ENCODE measurements at regions of chr5 and their contacts with region 1.

Region 1: DNA sequence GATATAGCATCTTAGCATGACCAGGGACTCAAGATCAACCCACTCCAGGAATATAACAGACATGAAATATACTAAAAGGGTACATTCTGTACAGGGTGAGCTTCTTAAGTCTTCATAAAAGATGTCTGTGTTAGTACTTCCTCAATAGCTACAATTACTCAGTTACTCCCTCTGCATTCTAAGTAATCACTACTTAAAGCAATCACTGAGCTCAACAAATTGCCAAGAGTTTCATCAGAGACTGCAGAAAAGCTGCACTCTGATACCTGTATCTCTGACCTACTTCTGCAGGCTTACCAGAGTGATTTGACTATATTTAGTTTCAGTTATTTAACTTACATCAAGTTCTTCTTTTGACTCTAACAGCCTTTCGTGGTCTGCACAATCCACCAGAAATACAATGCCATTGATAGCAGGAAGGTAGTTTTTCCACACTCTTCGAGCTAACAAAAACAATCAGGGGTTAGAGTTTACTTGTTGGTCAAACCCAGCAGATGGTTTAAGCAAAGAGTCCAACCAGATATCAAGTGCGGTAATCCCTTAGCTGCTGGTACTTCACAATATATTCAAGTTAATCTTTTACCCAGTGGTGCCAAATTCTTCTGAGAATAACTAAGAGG is 23.3 kb downstream of the SAR1B start:
- DNase-seq: no peak
- H3K4me3 Mint-ChIP-seq: peak overlapping the region; percentile 22
- H3K27ac Mint-ChIP-seq: peak overlapping the region; percentile 84
- H3K4me1 Mint-ChIP-seq: peaks cover 45% of the 10 kb centered on the region
- H3K27me3 Mint-ChIP-seq: no peaks in the 10 kb centered on the region

Region 2: DNA sequence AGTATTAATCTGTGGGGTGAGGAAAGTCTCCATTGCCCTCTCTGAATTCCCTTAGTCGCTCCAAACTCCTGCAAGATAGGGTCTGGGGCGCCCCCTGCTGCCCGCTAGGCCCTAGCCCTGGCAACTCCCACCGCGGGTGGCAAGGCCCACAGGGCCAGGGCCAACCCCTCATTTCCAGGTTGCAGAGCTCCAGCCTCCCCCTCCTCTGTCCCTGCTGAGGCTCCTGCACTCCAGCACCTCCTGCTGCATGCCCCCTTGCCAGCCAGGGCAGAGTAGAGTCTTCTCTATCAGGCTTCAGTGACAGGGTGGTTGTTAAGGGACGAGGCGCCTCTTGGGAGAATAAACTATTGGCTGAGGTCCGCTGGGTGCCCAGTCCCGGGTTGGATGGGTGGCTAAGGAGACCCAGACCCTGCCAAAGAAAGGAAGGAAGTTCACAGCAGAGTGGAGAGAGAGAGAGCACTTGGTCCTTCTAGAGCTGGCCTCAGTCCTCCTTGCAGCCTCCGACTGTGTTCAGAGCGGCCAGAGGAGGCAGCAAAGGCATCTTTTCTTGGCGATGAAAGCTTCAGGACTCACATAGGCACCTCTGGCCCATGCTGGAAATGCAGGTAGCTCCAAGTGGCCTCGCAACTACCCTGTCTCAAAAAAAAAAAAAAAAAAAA is 22.3 kb before region 1 on chr5:
- intact Hi-C with region 1: no loop called
- DNase-seq: peak; percentile 74
- H3K4me3 Mint-ChIP-seq: no peak overlapping the region
- H3K27ac Mint-ChIP-seq: peak overlapping the region; percentile 25
- H3K4me1 Mint-ChIP-seq: peaks cover 15% of the 10 kb centered on the region
- H3K27me3 Mint-ChIP-seq: no peaks in the 10 kb centered on the region

Region 3: GRCh38 chr5:134637161-134637582 is 27.8 kb after region 1 on chr5:
- intact Hi-C with region 1: loop called (anchors 2 kb)
- DNase-seq: no peak
- H3K4me3 Mint-ChIP-seq: no peak overlapping the region
- H3K27ac Mint-ChIP-seq: no peak overlapping the region
- H3K4me1 Mint-ChIP-seq: peaks cover 9% of the 10 kb centered on the region
- H3K27me3 Mint-ChIP-seq: no peaks in the 10 kb centered on the region

Measured in activated T-helper 2 cell treated with anti-CD3 and anti-CD28 coated beads, Interferon-gamma antibody, Interleukin-2, Interleukin-4, amounts not matched to agents 10 μg/mL and 5 μg/mL and 100 μg/mL, durations not matched to agents 14 hours and 24 hours and 36 hours (primary cell).